Ovary (tissue), 10 donors: ENCODE measurements at regions of chr19 and their contacts with region 1.

Region 1: GRCh38 chr19:39889872-39890545 is 43.8 kb upstream of the FBL start:
- DNase-seq: no peak
- H3K4me3 ChIP-seq: no peak overlapping the region
- H3K27ac ChIP-seq: no peak overlapping the region
- H3K4me1 ChIP-seq: peaks cover 3% of the 10 kb centered on the region
- H3K27me3 ChIP-seq: no peaks in the 10 kb centered on the region
- CTCF ChIP-seq: no peak
- EP300 ChIP-seq: no peak
- POLR2A ChIP-seq: no peak

Region 2: DNA sequence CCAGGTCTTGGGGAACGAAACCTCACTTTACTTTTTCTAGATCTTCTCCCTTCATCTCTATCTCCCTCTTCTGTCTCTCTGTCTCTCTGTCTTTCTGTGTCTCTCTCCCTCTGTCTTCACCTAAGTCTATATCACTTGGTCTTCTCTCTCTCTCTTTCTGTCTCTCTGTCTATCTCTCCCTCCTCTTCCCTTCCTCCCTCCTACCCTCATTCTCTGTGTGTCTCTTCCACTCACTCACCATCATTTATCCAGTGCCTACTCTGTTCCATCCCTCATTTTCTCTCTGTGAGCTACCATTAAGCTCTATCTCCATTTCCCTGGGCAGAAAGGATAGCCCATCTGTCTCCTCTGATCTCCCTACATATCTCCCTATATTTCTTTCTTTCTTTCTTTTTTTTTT is 11.6 kb before region 1 on chr19:
- intact Hi-C with region 1: loop called in 1 of 4 experiments (anchors 2 kb)
- DNase-seq: no peak
- H3K4me3 ChIP-seq: no peak overlapping the region
- H3K27ac ChIP-seq: no peak overlapping the region
- H3K4me1 ChIP-seq: no peaks in the 10 kb centered on the region
- H3K27me3 ChIP-seq: no peaks in the 10 kb centered on the region
- CTCF ChIP-seq: no peak
- EP300 ChIP-seq: no peak
- POLR2A ChIP-seq: no peak

Region 3: DNA sequence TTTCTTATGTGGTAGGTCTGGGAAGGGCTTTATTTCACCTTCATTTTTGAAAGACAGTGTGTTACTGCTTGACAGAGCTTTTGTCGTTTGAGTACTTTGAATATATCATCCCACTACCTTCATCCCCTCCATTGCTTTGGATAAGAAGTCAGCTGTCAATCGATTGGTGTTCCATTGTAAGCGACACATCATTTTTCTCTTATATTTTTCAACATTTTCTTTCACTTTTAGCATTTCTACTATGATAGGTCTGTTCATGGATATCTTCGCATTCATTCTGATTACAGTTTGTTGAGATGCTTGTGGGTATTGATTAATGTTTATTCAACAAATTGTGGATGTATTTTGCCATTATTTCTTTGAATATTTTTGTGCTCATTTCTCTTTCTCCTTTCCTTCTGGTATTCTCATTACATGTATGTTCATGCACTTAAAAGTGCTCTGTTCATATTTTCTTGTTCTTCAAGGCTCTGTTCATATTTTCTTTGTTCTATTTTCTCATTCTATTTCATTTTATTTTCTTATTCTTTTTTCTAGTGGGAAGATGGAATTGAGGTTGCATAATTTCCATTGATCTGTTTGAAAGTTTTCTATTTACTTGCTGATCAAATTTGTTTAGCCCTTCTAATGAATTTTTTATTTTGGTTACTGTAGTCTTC is 136.1 kb after region 1 on chr19:
- intact Hi-C with region 1: no loop called
- DNase-seq: no peak
- H3K4me3 ChIP-seq: no peak overlapping the region
- H3K27ac ChIP-seq: no peak overlapping the region
- H3K4me1 ChIP-seq: no peaks in the 10 kb centered on the region
- H3K27me3 ChIP-seq: no peaks in the 10 kb centered on the region
- CTCF ChIP-seq: no peak
- EP300 ChIP-seq: no peak
- POLR2A ChIP-seq: no peak